ENCODE measurements at regions of chr7 and their contacts with region 1.

Region 1: DNA sequence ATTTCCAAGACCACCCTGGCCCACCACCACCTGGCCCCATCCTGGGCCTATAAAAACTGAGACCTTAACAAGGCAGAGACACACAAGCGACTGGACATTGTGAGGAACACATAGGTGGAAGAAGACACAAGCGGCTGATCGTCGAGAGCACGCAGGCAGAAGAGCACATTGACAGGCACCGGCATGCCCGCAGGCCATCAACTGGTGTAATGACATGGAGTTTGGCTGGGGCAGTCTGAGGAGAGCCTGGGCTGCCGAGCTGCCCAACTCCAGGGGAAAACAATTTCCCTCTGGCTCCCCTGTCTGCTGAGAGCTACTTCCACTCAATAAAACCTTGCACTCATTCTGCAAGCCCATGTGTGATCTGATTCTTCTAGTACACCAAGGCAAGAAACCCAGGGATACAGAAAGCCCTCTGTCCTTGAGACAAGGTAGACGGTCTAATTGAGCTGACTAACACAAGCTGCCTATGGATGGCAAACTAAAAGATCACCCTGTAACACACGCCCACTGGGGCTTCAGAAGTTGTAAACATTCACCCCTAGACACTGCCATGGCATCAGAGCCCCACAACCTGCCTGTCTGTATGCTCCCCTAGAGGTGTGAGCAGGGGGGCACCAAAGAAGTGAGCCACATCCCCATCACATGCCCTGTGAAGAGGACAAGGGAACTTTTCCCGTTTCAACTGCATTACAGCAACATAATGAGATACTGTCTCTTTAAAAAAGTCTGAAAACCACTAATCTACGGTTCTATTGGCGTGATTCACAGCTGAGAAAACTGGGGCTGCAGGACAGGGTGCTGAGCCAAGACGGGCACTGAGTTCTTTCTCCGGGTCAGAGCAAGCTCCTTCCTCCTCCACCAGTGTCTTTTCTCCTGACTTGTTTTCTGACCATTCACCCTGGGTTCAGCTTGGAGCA is 18.5 kb upstream of the TNS3 start:
- DNase-seq: no peak
- ATAC-seq: peak; percentile 61
- H3K4me3 ChIP-seq: peak overlapping the region in 4 of 5 experiments; percentile 7 to 46 (median 13)
- H3K4me3 Mint-ChIP-seq: peak overlapping the region; percentile 74
- H3K27ac ChIP-seq: peak overlapping the region; percentile 57 to 63
- H3K27ac Mint-ChIP-seq: peak overlapping the region; percentile 88
- H3K4me1 ChIP-seq: peaks cover 30 to 38% of the 10 kb centered on the region in 2 donors
- H3K4me1 Mint-ChIP-seq: peaks cover 49% of the 10 kb centered on the region
- H3K27me3 ChIP-seq: no peaks in the 10 kb centered on the region
- H3K27me3 Mint-ChIP-seq: no peaks in the 10 kb centered on the region
- CTCF ChIP-seq: no peak

Region 2: GRCh38 chr7:47474937-47475878 is 125.3 kb before region 1 on chr7:
- CTCF ChIA-PET with region 1: no interaction called
- POLR2A ChIA-PET with region 1: no interaction called
- intact Hi-C with region 1: loop called (anchors 2 kb)
- DNase-seq: peak; percentile 40
- ATAC-seq: peak; percentile 93
- H3K4me3 ChIP-seq: no peak overlapping the region
- H3K4me3 Mint-ChIP-seq: no peak overlapping the region
- H3K27ac ChIP-seq: no peak overlapping the region
- H3K27ac Mint-ChIP-seq: peak overlapping the region; percentile 21
- H3K4me1 ChIP-seq: peaks cover 35 to 48% of the 10 kb centered on the region in 2 donors
- H3K4me1 Mint-ChIP-seq: peaks cover 32% of the 10 kb centered on the region
- H3K27me3 ChIP-seq: no peaks in the 10 kb centered on the region
- H3K27me3 Mint-ChIP-seq: no peaks in the 10 kb centered on the region
- CTCF ChIP-seq: no peak

Region 3: GRCh38 chr7:47536661-47537611 is 63.5 kb before region 1 on chr7:
- CTCF ChIA-PET with region 1: no interaction called
- POLR2A ChIA-PET with region 1: no interaction called
- intact Hi-C with region 1: no loop called
- DNase-seq: no peak
- ATAC-seq: no peak
- H3K4me3 ChIP-seq: peak overlapping the region in 2 of 5 experiments; percentile 19 to 25
- H3K4me3 Mint-ChIP-seq: peak overlapping the region; percentile 74
- H3K27ac ChIP-seq: no peak overlapping the region
- H3K27ac Mint-ChIP-seq: peak overlapping the region; percentile 7
- H3K4me1 ChIP-seq: peaks cover 0 to 7% of the 10 kb centered on the region in 2 donors
- H3K4me1 Mint-ChIP-seq: peaks cover 48% of the 10 kb centered on the region
- H3K27me3 ChIP-seq: peaks cover 0 to 19% (median 7%) of the 10 kb centered on the region in 4 experiments
- H3K27me3 Mint-ChIP-seq: peaks cover 5% of the 10 kb centered on the region
- CTCF ChIP-seq: no peak

Region 4: GRCh38 chr7:47574482-47575329 is 25.8 kb before region 1 on chr7:
- CTCF ChIA-PET with region 1: interaction called, 3 read pairs
- POLR2A ChIA-PET with region 1: interaction called, 6 read pairs
- intact Hi-C with region 1: loop called (anchors 2 kb)
- DNase-seq: peak; percentile 86
- ATAC-seq: peak; percentile 81
- H3K4me3 ChIP-seq: peak overlapping the region in 3 of 5 experiments; percentile 7 to 35 (median 27)
- H3K4me3 Mint-ChIP-seq: peak overlapping the region; percentile 71
- H3K27ac ChIP-seq: no peak overlapping the region
- H3K27ac Mint-ChIP-seq: peak overlapping the region; percentile 83
- H3K4me1 ChIP-seq: peaks cover 78 to 96% of the 10 kb centered on the region in 2 donors
- H3K4me1 Mint-ChIP-seq: peaks cover 92% of the 10 kb centered on the region
- H3K27me3 ChIP-seq: no peaks in the 10 kb centered on the region
- H3K27me3 Mint-ChIP-seq: no peaks in the 10 kb centered on the region
- CTCF ChIP-seq: no peak

Measured in B cell (primary cell).